Activated T-helper 1 cell treated with anti-CD3 and anti-CD28 coated beads, Interleukin-12 subunit alpha, Interleukin-12 subunit beta, Interleukin-2, Interleukin-4 antibody, amounts not matched to agents 30 ng/mL and 10 ng/mL and 1 ng/mL, durations not matched to agents 14 hours and 24 hours and 36 hours (primary cell): ENCODE measurements at regions of chr19 and their contacts with region 1.

Region 1: GRCh38 chr19:48271531-48272151 is 1.8 kb downstream of the ZNF114 start:
- DNase-seq: no peak
- H3K4me3 Mint-ChIP-seq: peak overlapping the region; percentile 81
- H3K27ac Mint-ChIP-seq: peak overlapping the region; percentile 23
- H3K4me1 Mint-ChIP-seq: peaks cover 13% of the 10 kb centered on the region
- H3K27me3 Mint-ChIP-seq: peaks cover 21% of the 10 kb centered on the region

Region 2: GRCh38 chr19:48290771-48291488 is 19.3 kb after region 1 on chr19:
- intact Hi-C with region 1: loop called (anchors 1 kb)
- DNase-seq: peak; percentile 43
- H3K4me3 Mint-ChIP-seq: peak overlapping the region; percentile 64
- H3K27ac Mint-ChIP-seq: no peak overlapping the region
- H3K4me1 Mint-ChIP-seq: peaks cover 7% of the 10 kb centered on the region
- H3K27me3 Mint-ChIP-seq: peaks cover 12% of the 10 kb centered on the region

Region 3: GRCh38 chr19:48333467-48334384 is 62.1 kb after region 1 on chr19:
- intact Hi-C with region 1: loop called (anchors 1 kb)
- DNase-seq: peak; percentile 92
- H3K4me3 Mint-ChIP-seq: peak overlapping the region; percentile 95
- H3K27ac Mint-ChIP-seq: peak overlapping the region; percentile 97
- H3K4me1 Mint-ChIP-seq: peaks cover 55% of the 10 kb centered on the region
- H3K27me3 Mint-ChIP-seq: peaks cover 1% of the 10 kb centered on the region

Region 4: DNA sequence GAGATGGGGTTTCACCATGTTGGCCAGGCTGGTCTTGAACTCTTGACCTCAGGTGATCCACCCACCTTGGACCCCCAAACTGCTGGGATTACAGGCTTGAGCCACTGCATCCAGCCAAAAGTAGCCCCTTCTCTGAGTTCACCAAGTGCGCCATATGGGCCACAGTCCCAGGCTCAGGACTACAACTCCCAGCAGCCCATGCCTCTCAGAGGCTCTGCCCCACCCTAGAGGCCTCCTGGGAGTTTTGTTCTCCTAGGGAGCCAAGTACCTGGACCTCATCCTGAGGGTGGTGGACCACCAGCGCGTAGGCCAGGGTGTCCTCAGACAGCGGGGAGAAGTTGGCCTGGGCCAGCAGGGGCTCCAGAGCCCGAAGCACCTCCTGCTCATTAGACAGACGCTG is 73.3 kb after region 1 on chr19:
- intact Hi-C with region 1: no loop called
- DNase-seq: no peak
- H3K4me3 Mint-ChIP-seq: no peak overlapping the region
- H3K27ac Mint-ChIP-seq: no peak overlapping the region
- H3K4me1 Mint-ChIP-seq: no peaks in the 10 kb centered on the region
- H3K27me3 Mint-ChIP-seq: no peaks in the 10 kb centered on the region

Region 5: DNA sequence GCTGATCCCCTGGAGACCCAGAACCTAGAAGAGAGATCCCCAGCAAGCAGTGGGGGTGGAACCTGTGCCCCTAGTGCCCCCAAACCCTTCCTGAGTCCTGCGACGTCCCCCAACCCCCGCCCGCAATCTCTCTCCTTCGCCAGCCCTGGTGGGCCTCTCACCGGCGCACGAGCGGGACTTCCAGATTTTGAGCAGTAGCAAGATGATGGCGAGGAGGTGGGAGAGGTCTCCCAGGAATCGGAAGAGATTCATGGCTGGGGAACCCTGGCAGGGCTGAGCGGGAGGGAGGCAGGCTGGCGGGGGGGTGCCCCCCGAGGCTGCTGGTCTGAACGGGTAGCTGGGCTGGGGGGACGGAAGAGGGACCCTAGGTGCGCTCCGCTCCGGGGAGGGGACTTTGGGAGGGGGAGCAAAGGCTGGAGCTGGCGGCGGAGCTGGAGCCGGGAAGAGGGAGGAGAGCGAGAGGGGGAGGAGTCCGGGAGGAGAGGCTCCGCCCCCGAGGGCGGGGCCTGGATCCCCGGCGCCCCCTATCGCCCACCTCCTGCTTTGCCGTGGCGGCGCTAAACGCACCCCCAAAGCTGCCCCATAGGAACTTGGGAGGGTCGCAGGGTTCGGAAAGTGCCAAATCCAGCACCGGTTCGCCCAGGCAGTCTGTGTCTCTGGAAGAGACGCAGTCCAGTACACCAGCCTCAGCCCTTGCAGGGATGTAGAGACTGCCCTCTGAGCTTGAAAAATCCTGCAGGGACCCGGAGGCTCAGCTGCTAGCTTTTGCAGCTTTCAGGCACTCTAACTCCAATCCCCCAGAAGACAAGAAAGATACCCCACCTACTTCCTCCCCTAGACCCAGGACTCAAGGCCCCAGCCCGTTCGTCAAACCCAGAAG is 119.7 kb after region 1 on chr19 and contains the start of gene KDELR1:
- intact Hi-C with region 1: loop called (anchors 1 kb)
- DNase-seq: peak; percentile 69
- H3K4me3 Mint-ChIP-seq: peak within 1 kb of the TSS; percentile 98
- H3K27ac Mint-ChIP-seq: peak within 1 kb of the TSS; percentile 98
- H3K4me1 Mint-ChIP-seq: peaks cover 13% of the 10 kb centered on the region
- H3K27me3 Mint-ChIP-seq: peaks cover 36% of the 10 kb centered on the region
- total RNA-seq, gene KDELR1: 70.9 and 74.2 TPM in 2 replicates